ENCODE measurements at regions of chr4 and their contacts with region 1.

Region 1: DNA sequence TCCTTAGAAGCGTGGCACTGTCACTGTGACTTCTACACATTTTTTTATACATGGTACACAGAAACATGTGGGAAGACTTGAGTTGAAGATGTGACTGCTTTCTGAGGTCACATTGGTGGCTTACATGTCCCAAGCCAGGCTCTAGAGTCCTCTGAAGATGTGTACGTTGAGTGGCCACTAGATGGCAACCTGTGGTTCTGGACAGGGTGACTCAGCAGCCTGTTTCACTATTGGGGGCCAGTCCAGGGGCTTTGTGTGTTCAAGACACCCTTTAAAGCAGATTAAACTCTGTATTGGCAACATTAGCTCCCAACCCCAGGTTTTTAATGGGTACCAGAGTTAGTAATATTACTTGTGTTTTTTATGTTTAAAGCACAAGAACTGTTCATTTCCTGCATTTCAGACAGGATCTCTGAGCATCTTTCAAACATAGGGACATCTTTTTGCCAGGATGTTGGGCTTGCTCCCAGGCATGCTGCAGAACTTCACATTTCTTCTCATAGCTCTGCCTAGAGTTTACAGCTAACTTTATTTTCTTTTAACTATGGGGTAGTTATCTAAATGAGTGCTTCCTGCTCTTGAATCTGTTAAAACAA is 53.0 kb downstream of the DCUN1D4 start:
- DNase-seq: no peak
- ATAC-seq: peak; percentile 95

Region 2: DNA sequence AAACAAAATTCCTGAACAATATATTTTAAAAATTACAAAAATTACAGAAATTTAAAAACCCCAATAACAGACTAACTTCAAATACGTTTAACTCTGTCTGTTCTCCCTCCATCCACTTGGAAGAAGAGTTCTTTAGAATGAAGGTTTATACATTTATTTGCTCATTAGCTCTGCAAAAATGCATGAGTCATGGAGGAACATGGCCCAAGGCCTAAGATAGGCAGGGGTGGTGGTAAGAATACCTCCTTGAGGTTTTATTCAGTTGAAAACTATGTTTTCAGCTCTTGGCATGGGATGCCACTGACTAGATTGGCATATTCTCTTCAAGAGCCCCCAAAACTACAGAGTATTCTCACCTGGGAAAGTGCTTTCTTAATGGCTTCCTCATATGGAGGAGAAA is 133.1 kb after region 1 on chr4:
- intact Hi-C with region 1: loop called (anchors 5 kb)
- DNase-seq: no peak
- ATAC-seq: no peak